Activated CD4-positive, alpha-beta memory T cell treated with anti-CD3 and anti-CD28 coated beads, Interleukin-2, amount 10 ng/mL, durations not matched to agents 7 days and 5 days (primary cell): ENCODE measurements at regions of chr3 and their contacts with region 1.

Region 1: GRCh38 chr3:114290911-114291901 is 2.6 kb upstream of the TIGIT start:
- DNase-seq: peak; percentile 91
- H3K4me3 Mint-ChIP-seq: peak overlapping the region; percentile 77
- H3K27ac Mint-ChIP-seq: peak overlapping the region; percentile 88
- H3K4me1 Mint-ChIP-seq: peaks cover 46% of the 10 kb centered on the region
- H3K27me3 Mint-ChIP-seq: no peaks in the 10 kb centered on the region

Region 2: DNA sequence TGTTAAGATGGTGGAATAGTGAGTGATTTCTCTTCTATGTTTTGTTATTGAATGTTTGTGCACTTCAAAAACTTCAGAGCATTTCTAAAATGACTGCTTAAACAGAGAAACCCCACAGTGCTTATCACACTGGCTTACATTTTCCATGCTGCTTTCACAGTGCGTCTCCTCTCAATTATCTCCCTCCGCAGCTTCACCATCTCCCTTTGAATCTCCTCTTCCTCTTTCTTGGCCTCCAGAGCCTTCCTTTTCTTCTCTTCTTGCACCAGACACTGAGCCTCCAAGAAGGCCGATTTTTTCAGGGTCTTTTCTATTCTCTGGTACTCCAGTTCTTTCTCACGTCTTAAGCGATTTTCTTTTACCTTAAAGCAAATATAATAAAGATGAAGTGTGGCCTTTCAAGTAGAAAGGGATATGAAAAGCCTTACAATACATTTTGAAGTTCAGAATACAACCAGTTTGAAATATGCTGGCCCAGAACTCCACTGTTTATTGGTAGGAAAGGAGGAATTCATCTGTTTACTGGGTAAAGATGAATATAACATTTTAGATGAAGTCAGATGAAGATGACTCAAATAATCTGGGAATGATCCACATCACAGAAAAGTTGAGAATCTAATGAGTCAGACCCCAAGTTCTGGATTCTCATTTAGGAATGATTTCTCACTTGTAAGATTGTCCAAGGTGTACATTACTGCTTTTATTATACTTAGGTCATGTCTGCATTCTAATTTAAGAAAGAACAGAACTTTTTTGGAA is 256.2 kb before region 1 on chr3:
- CTCF ChIA-PET with region 1: no interaction called
- POLR2A ChIA-PET with region 1: no interaction called
- DNase-seq: no peak
- H3K4me3 Mint-ChIP-seq: no peak overlapping the region
- H3K27ac Mint-ChIP-seq: no peak overlapping the region
- H3K4me1 Mint-ChIP-seq: no peaks in the 10 kb centered on the region
- H3K27me3 Mint-ChIP-seq: no peaks in the 10 kb centered on the region

Region 3: GRCh38 chr3:114152519-114153151 is 138.6 kb before region 1 on chr3:
- CTCF ChIA-PET with region 1: interaction called, 18 read pairs
- POLR2A ChIA-PET with region 1: interaction called, 8 read pairs
- DNase-seq: peak; percentile 83
- H3K4me3 Mint-ChIP-seq: peak overlapping the region; percentile 55
- H3K27ac Mint-ChIP-seq: no peak overlapping the region
- H3K4me1 Mint-ChIP-seq: peaks cover 11% of the 10 kb centered on the region
- H3K27me3 Mint-ChIP-seq: peaks cover 2% of the 10 kb centered on the region

Region 4: GRCh38 chr3:114223143-114223542 is 68.1 kb before region 1 on chr3:
- CTCF ChIA-PET with region 1: interaction called, 16 read pairs
- POLR2A ChIA-PET with region 1: interaction called, 133 read pairs
- DNase-seq: no peak
- H3K4me3 Mint-ChIP-seq: no peak overlapping the region
- H3K27ac Mint-ChIP-seq: peak overlapping the region; percentile 99
- H3K4me1 Mint-ChIP-seq: peaks cover 95% of the 10 kb centered on the region
- H3K27me3 Mint-ChIP-seq: no peaks in the 10 kb centered on the region

Region 5: GRCh38 chr3:114308830-114309229 is 17.6 kb after region 1 on chr3:
- CTCF ChIA-PET with region 1: interaction called, 51 read pairs
- POLR2A ChIA-PET with region 1: interaction called, 78 read pairs
- DNase-seq: peak; percentile 75
- H3K4me3 Mint-ChIP-seq: peak overlapping the region; percentile 51
- H3K27ac Mint-ChIP-seq: peak overlapping the region; percentile 90
- H3K4me1 Mint-ChIP-seq: peaks cover 52% of the 10 kb centered on the region
- H3K27me3 Mint-ChIP-seq: no peaks in the 10 kb centered on the region

Region 6: GRCh38 chr3:114336122-114336697 is 45.0 kb after region 1 on chr3:
- CTCF ChIA-PET with region 1: interaction called, 10 read pairs
- POLR2A ChIA-PET with region 1: interaction called, 6 read pairs
- DNase-seq: no peak
- H3K4me3 Mint-ChIP-seq: no peak overlapping the region
- H3K27ac Mint-ChIP-seq: no peak overlapping the region
- H3K4me1 Mint-ChIP-seq: peaks cover 59% of the 10 kb centered on the region
- H3K27me3 Mint-ChIP-seq: no peaks in the 10 kb centered on the region

Region 7: GRCh38 chr3:114383875-114384557 is 92.8 kb after region 1 on chr3:
- CTCF ChIA-PET with region 1: interaction called, 17 read pairs
- POLR2A ChIA-PET with region 1: no interaction called
- DNase-seq: peak; percentile 73
- H3K4me3 Mint-ChIP-seq: peak overlapping the region; percentile 61
- H3K27ac Mint-ChIP-seq: peak overlapping the region; percentile 57
- H3K4me1 Mint-ChIP-seq: peaks cover 9% of the 10 kb centered on the region
- H3K27me3 Mint-ChIP-seq: no peaks in the 10 kb centered on the region